ENCODE measurements at regions of chr16 and their contacts with region 1.

Region 1: DNA sequence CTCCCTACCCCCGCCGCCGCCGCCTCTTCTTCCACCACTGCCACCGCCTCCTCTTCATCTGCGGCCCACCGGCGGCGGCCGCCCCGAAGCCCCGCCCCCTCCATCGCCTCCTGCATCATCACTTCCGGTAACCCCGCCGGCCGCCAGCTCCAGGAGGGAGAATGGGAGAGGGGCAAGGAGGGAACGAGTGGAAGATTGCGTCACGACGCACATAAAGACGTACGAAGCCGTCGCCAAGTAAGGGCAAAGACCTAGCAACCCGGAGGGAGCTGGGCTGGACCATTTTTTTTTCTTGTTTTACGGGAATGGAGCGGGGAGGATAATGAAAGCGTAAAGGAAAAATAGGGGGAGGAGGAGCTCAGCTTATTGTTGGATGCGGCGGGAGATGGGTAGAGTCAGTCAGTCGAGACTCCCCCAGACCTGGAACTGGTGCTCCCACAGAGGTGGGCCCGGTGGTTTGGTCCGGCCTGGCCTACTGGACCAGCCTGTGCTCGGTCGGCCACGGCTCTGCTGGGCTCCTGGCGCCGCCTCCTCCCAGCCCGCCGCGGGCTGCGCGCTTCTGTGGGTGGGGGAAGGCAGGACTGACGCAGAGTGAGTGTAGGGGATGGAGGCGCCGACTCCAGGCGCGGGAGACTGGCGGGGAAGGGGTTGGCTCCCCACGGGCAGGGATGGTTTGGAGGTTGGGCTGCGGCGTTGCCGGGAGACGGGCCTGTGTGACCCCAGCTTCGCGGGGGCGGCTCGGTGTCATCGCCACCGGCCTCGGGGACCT is at the starts of genes DCUN1D3 and LYRM1:
- DNase-seq: peak; percentile 97 to 98
- ATAC-seq: peak; percentile 95
- H3K4me3 ChIP-seq: peak within 1 kb of the TSS; percentile 52 to 91
- H3K27ac ChIP-seq: peak within 1 kb of the TSS; percentile 82 to 91
- H3K4me1 ChIP-seq: peaks cover 4 to 25% of the 10 kb centered on the region in 2 donors
- H3K27me3 ChIP-seq: no peaks in the 10 kb centered on the region
- total RNA-seq, gene DCUN1D3: 29.5 to 54.5 TPM
- total RNA-seq, gene LYRM1: 18.1 to 24.3 TPM

Region 2: GRCh38 chr16:20866145-20866772 is 34.2 kb before region 1 on chr16:
- intact Hi-C with region 1: loop called in 1 of 2 experiments (anchors 5 kb)
- DNase-seq: peak; percentile 76 to 82
- ATAC-seq: peak; percentile 28
- H3K4me3 ChIP-seq: no peak overlapping the region
- H3K27ac ChIP-seq: peak overlapping the region; percentile 12 to 79
- H3K4me1 ChIP-seq: peaks cover 9 to 27% of the 10 kb centered on the region in 2 donors
- H3K27me3 ChIP-seq: no peaks in the 10 kb centered on the region

Region 3: DNA sequence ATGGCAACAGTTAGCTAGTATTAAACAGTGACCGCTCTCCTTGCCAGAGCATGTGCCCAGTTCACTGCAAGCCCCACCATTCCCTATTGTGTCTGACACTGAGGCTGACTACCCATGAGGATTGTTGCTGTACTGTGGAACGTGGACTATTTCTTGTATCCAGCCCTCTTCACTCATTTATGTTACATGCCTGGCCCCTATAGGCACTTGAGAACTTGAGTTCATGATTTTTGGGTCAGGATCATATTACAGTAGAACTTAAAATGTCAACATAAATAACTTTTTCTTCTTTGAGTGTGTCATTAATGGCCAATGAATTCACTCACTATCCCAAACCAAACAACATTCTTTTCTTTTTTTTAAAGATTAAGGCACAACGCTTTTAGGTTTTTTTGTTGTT is 55.8 kb after region 1 on chr16:
- intact Hi-C with region 1: no loop called
- DNase-seq: no peak
- ATAC-seq: no peak
- H3K4me3 ChIP-seq: no peak overlapping the region
- H3K27ac ChIP-seq: no peak overlapping the region
- H3K4me1 ChIP-seq: no peaks in the 10 kb centered on the region
- H3K27me3 ChIP-seq: no peaks in the 10 kb centered on the region

Region 4: GRCh38 chr16:22206013-22206841 is 1305.7 kb after region 1 on chr16 and contains the start of gene EEF2K:
- intact Hi-C with region 1: loop called in 1 of 2 experiments (anchors 10 kb)
- DNase-seq: peak; percentile 95 to 97
- ATAC-seq: peak; percentile 93
- H3K4me3 ChIP-seq: peak within 1 kb of the TSS; percentile 39 to 73
- H3K27ac ChIP-seq: peak within 1 kb of the TSS; percentile 48 to 82
- H3K4me1 ChIP-seq: peaks cover 3 to 4% of the 10 kb centered on the region in 2 donors
- H3K27me3 ChIP-seq: no peaks in the 10 kb centered on the region
- total RNA-seq, gene EEF2K: 40.6 to 56.3 TPM